ENCODE measurements at regions of chr9 and their contacts with region 1.

Region 1: GRCh38 chr9:18928711-18929110 is 104.3 kb downstream of the SAXO1 start:
- DNase-seq: no peak
- H3K4me3 ChIP-seq: no peak overlapping the region
- H3K27ac ChIP-seq: no peak overlapping the region
- H3K4me1 ChIP-seq: no peaks in the 10 kb centered on the region
- H3K27me3 ChIP-seq: no peaks in the 10 kb centered on the region
- CTCF ChIP-seq: no peak
- POLR2A ChIP-seq: no peak

Region 2: GRCh38 chr9:18947772-18948391 is 19.2 kb after region 1 on chr9:
- intact Hi-C with region 1: loop called (anchors 1 kb)
- DNase-seq: no peak
- H3K4me3 ChIP-seq: no peak overlapping the region
- H3K27ac ChIP-seq: no peak overlapping the region
- H3K4me1 ChIP-seq: no peaks in the 10 kb centered on the region
- H3K27me3 ChIP-seq: no peaks in the 10 kb centered on the region
- CTCF ChIP-seq: no peak
- POLR2A ChIP-seq: no peak